ENCODE measurements at regions of chr4 and their contacts with region 1.

Region 1: GRCh38 chr4:38326499-38326898 is 337.5 kb upstream of the KLF3 start:
- DNase-seq: no peak
- H3K4me3 ChIP-seq: no peak overlapping the region
- H3K27ac ChIP-seq: no peak overlapping the region
- H3K4me1 ChIP-seq: no peaks in the 10 kb centered on the region
- H3K27me3 ChIP-seq: no peaks in the 10 kb centered on the region
- CTCF ChIP-seq: no peak
- POLR2A ChIP-seq: no peak

Region 2: GRCh38 chr4:38279650-38280322 is 46.7 kb before region 1 on chr4:
- intact Hi-C with region 1: loop called (anchors 2 kb)
- DNase-seq: no peak
- H3K4me3 ChIP-seq: no peak overlapping the region
- H3K27ac ChIP-seq: no peak overlapping the region
- H3K4me1 ChIP-seq: no peaks in the 10 kb centered on the region
- H3K27me3 ChIP-seq: no peaks in the 10 kb centered on the region
- CTCF ChIP-seq: no peak
- POLR2A ChIP-seq: no peak

Measured in breast epithelium (tissue), 4 donors.